Right cardiac atrium (tissue), 5 donors: ENCODE measurements at regions of chr10 and their contacts with region 1.

Region 1: DNA sequence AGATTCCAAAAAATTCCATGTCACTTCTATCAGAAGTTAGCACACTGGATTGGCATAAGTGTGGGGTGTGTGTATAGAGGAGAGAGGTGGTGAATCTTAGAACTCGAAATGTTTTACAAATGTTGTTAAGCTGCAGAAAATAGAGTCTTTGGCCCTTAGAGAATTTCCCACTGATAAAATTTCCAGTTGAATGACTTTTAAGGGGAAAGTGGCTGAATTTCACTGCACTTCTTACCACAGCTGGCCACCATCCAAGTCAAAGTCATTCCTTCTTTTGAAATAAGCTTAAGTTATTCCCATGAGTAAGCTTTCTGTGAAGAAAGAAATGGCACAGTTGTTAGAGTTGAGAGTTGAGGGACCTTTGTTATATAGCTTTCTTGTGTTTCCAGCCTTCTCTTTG is 13.9 kb downstream of the VCL start:
- DNase-seq: peak in 1 of 3 donors; percentile 31
- ATAC-seq: peak; percentile 44 to 55
- H3K4me3 ChIP-seq: no peak overlapping the region
- H3K27ac ChIP-seq: no peak overlapping the region
- H3K4me1 ChIP-seq: peaks cover 4% of the 10 kb centered on the region
- H3K27me3 ChIP-seq: no peaks in the 10 kb centered on the region

Region 2: DNA sequence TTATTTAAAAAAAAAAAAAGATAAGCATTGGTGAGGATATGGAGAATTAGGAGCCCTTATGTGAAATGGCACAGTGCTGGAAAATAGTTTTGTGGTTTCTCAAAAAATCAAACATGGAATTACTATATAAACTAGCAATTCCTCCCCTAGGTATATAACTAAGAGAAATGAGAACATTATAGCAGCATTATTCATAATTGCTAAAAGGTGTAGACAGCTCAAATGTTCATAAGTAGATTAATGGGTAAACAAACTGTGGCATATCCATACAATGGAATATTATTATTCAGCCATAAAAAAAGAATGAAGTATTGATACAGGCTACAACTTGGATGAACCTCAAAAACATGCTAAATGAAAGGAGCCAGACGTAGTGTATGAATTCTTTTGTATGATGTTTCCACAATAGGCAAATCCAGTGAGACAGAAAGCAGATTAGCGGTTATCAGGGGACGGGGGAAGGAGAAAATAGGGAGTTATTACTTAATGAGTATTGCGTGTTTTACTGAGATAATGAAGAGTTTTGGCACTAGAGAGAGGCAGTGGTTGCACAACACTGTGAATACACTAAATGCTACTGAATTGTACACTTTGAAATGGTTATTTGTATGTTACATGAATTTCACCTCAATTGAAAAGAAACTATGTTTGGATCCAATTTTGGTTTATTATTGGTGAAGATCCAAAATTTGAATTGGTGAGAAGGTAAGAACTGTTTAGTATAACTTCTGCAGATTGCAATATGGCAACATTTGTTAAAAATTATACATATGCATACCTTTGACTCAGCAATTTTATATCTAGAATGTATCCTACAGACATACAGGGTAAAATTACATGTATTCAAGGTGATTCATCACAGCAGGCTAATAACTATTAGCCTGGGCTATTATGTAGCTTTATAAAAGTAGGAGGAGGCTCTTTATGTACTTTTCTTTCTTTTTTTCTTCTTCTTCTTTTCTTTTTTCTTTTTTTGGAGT is 55.9 kb after region 1 on chr10:
- intact Hi-C with region 1: loop called in 1 of 4 experiments (anchors 10 kb)
- DNase-seq: no peak
- ATAC-seq: peak; percentile 65 to 68
- H3K4me3 ChIP-seq: no peak overlapping the region
- H3K27ac ChIP-seq: no peak overlapping the region
- H3K4me1 ChIP-seq: peaks cover 1% of the 10 kb centered on the region
- H3K27me3 ChIP-seq: no peaks in the 10 kb centered on the region